ENCODE measurements at regions of chr16 and their contacts with region 1.

Region 1: DNA sequence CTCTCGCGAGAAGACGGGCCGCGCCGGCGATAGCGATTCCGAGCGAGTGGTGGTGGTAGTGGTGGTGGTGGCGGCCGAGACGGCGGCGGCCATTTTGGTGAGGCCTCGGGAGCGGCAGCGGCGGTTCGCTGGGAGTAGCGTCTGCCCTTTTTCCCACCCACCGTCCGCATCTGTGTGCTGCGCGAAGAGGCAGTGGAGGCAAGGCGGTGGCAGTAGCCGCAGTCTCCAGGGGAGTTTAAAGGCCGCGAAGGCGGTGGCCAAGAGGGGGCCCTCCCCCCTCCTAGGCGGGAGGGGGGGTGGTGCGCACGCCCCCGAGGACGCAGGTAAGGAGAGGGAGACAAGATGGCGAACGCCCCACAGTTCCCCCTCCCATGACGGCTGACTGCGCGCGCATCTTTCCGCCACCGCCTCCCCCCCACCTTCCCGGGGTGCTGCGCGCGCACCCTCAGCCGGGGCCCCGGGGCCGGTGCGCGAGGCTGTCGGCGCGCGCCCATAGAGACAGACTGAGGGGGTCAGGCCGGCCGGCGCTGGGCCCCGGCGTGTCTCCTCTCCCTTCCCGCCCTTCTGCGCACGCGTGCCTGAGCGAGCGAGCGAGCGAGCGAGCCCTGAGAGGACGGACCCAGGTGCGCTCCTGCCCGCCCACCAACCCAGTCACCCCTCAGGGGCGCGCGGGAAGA is 694 bp upstream of the SRCAP start:
- DNase-seq: peak; percentile 87
- ATAC-seq: peak; percentile 83
- H3K4me3 ChIP-seq: peak overlapping the region; percentile 85
- H3K27ac ChIP-seq: peak overlapping the region; percentile 99
- H3K4me1 ChIP-seq: peaks cover 8% of the 10 kb centered on the region
- H3K27me3 ChIP-seq: no peaks in the 10 kb centered on the region
- CTCF ChIP-seq: no peak
- POLR2A ChIP-seq: peak; percentile 95
- RAD21 ChIP-seq: no peak

Region 2: GRCh38 chr16:30657866-30658730 is 40.2 kb before region 1 on chr16 and contains the start of gene FBRS:
- CTCF ChIA-PET with region 1: interaction called, 4 read pairs
- POLR2A ChIA-PET with region 1: no interaction called
- dilution Hi-C with region 1: no loop called
- in situ Hi-C with region 1: no loop called
- intact Hi-C with region 1: loop called (anchors 1 kb)
- DNase-seq: peak; percentile 100
- ATAC-seq: peak; percentile 83
- H3K4me3 ChIP-seq: peak within 1 kb of the TSS; percentile 62
- H3K27ac ChIP-seq: peak within 1 kb of the TSS; percentile 92
- H3K4me1 ChIP-seq: peaks cover 12% of the 10 kb centered on the region; the same call in 1 of the 2 replicates
- H3K27me3 ChIP-seq: no peaks in the 10 kb centered on the region
- CTCF ChIP-seq: peak; percentile 98
- POLR2A ChIP-seq: peak; percentile 91
- RAD21 ChIP-seq: peak; percentile 69
- total RNA-seq, gene FBRS: 2.0 and 2.8 TPM in 2 replicates